ENCODE measurements at regions of chr5 and their contacts with region 1.

Region 1: DNA sequence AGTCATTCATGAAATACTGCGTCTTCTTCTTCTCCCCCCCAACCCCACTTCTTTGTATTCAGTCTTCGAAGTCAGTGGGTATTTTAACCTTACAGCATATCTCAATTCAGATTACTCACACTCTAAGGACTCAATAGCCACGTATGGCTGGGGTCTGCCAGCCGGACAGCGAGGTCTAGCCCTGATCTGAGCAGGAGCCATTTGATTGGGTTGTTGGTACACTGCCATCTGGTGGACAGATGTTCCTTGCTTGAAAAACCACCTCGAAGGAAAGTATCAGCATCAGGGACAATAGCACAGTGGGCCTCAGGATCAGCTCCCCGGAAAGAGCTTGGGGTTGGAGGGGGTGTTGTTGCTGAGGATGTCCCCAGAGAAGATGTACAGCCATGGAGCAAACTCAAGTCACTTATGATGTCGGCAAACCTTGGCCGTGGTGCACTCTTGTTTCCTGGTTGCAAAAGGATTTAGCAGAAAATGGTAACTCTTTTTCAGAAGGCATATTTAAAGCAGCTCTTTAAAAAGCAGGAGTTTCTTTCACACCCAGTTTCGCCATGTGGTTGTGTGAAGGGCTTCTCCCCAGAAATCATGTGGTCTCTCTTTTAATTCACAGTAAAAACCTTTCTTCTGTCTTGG is 31.7 kb upstream of the KCNMB1 start:
- DNase-seq: peak in 1 of 2 donors; percentile 75
- ATAC-seq: peak; percentile 62 to 75 (median 71)
- H3K4me3 ChIP-seq: no peak overlapping the region
- H3K27ac ChIP-seq: peak overlapping the region in 1 of 10 donors; percentile 6
- H3K4me1 ChIP-seq: peaks cover 0 to 32% (median 18%) of the 10 kb centered on the region in 9 donors
- H3K27me3 ChIP-seq: peaks cover 0 to 10% (median 0%) of the 10 kb centered on the region in 7 donors
- CTCF ChIP-seq: peak; percentile 64 to 89 (median 81)

Region 2: DNA sequence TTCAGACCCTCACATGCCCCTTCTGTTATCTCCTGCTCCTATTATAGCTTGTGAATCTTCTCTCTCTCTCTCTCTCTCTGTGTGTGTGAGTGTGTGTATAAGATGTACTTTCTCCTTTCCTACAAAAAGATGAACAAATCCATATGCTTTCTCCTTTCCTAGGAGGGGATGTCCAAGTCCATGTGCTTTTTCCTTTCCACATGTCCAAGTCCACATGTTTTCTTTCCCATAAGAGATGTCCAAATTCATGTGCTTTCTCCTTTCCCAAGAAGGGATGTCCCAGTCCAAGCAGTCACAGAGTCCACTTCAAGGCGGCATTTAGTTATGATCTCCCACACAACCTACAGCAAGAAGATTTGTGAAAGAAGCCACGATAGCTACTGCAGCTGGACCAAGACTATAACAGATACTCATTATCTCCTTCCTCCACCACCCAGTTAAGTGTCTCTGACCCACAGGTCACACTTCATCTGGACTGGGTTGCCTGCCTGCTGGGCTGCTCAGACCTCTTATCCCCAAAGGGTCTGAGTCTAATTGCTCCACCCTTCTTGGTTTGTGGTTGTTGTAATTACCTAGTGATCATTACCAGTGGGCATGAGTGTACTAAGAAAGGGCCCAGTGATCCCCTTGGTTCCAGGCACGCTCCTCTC is 333.6 kb before region 1 on chr5:
- intact Hi-C with region 1: loop called in 1 of 10 experiments (anchors 10 kb)
- DNase-seq: no peak
- ATAC-seq: no peak
- H3K4me3 ChIP-seq: no peak overlapping the region
- H3K27ac ChIP-seq: no peak overlapping the region
- H3K4me1 ChIP-seq: no peaks in the 10 kb centered on the region
- H3K27me3 ChIP-seq: peaks cover 0 to 20% (median 0%) of the 10 kb centered on the region in 7 donors
- CTCF ChIP-seq: no peak

Region 3: GRCh38 chr5:170100066-170100943 is 320.6 kb before region 1 on chr5:
- intact Hi-C with region 1: loop called in 6 of 10 experiments (anchors 2 to 10 kb)
- DNase-seq: peak; percentile 62 to 77
- ATAC-seq: peak in 7 of 8 donors; percentile 60 to 76 (median 68)
- H3K4me3 ChIP-seq: no peak overlapping the region
- H3K27ac ChIP-seq: no peak overlapping the region
- H3K4me1 ChIP-seq: peaks cover 0 to 37% (median 0%) of the 10 kb centered on the region in 9 donors
- H3K27me3 ChIP-seq: peaks cover 0 to 5% (median 0%) of the 10 kb centered on the region in 7 donors
- CTCF ChIP-seq: peak; percentile 37 to 76 (median 69)

Region 4: GRCh38 chr5:170262061-170263045 is 158.5 kb before region 1 on chr5:
- intact Hi-C with region 1: loop called in 6 of 10 experiments (anchors 2 to 10 kb)
- DNase-seq: no peak
- ATAC-seq: no peak
- H3K4me3 ChIP-seq: no peak overlapping the region
- H3K27ac ChIP-seq: peak overlapping the region in 1 of 10 donors; percentile 54
- H3K4me1 ChIP-seq: peaks cover 0 to 37% (median 1%) of the 10 kb centered on the region in 9 donors
- H3K27me3 ChIP-seq: peaks cover 0 to 16% (median 0%) of the 10 kb centered on the region in 7 donors
- CTCF ChIP-seq: no peak

Region 5: GRCh38 chr5:170267431-170268152 is 153.3 kb before region 1 on chr5:
- intact Hi-C with region 1: loop called in 9 of 10 experiments (anchors 2 to 10 kb)
- DNase-seq: peak; percentile 72 to 80
- ATAC-seq: peak; percentile 61 to 81 (median 74)
- H3K4me3 ChIP-seq: peak overlapping the region in 2 of 10 donors; percentile 17 to 18
- H3K27ac ChIP-seq: peak overlapping the region in 3 of 10 donors; percentile 8 to 88 (median 16)
- H3K4me1 ChIP-seq: peaks cover 0 to 81% (median 13%) of the 10 kb centered on the region in 9 donors
- H3K27me3 ChIP-seq: peaks cover 0 to 16% (median 0%) of the 10 kb centered on the region in 7 donors
- CTCF ChIP-seq: peak; percentile 78 to 90 (median 85)

Region 6: GRCh38 chr5:170278611-170279452 is 142.1 kb before region 1 on chr5:
- intact Hi-C with region 1: loop called in 1 of 10 experiments (anchors 2 kb)
- DNase-seq: peak; percentile 33 to 46
- ATAC-seq: peak; percentile 44 to 74 (median 58)
- H3K4me3 ChIP-seq: peak overlapping the region in 1 of 10 donors; percentile 26
- H3K27ac ChIP-seq: peak overlapping the region in 5 of 10 donors; percentile 6 to 87 (median 29)
- H3K4me1 ChIP-seq: peaks cover 0 to 97% (median 20%) of the 10 kb centered on the region in 9 donors
- H3K27me3 ChIP-seq: no peaks in the 10 kb centered on the region
- CTCF ChIP-seq: no peak

Region 7: DNA sequence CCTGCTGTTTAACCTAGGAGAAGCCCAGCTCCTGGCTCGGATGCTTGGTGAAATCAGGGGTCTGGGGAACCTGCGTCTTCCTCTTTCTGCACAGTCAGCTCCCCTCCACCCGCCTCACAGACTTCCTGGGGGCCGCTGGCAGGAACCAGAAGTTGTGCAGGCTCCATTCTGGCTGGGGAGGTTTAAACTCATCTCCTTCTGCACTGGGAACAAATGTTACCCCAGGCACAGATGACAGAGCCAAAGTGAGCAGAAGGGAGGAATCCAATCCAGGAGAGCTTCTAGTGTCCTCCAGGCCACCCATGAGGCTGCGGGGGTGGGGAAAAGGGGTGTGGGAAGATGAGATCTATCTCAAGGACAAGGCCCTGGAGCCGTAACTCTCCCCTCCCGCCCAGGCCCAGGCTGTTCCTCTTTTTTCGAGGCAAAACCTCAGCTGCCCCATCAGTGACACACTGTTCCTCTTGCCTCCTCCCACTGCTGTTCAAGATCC is 62.9 kb before region 1 on chr5:
- intact Hi-C with region 1: loop called in 2 of 10 experiments (anchors 5 kb)
- DNase-seq: peak; percentile 50 to 62
- ATAC-seq: peak in 7 of 8 donors; percentile 37 to 61 (median 43)
- H3K4me3 ChIP-seq: no peak overlapping the region
- H3K27ac ChIP-seq: peak overlapping the region in 5 of 10 donors; percentile 17 to 84 (median 43)
- H3K4me1 ChIP-seq: peaks cover 15 to 95% (median 71%) of the 10 kb centered on the region in 9 donors
- H3K27me3 ChIP-seq: peaks cover 0 to 8% (median 0%) of the 10 kb centered on the region in 7 donors
- CTCF ChIP-seq: no peak

Region 8: GRCh38 chr5:170508660-170509322 is 87.9 kb after region 1 on chr5:
- intact Hi-C with region 1: no loop called
- DNase-seq: no peak
- ATAC-seq: no peak
- H3K4me3 ChIP-seq: no peak overlapping the region
- H3K27ac ChIP-seq: no peak overlapping the region
- H3K4me1 ChIP-seq: peaks cover 0 to 4% (median 0%) of the 10 kb centered on the region in 9 donors
- H3K27me3 ChIP-seq: peaks cover 0 to 31% (median 23%) of the 10 kb centered on the region in 7 donors
- CTCF ChIP-seq: peak in 1 of 9 donors; percentile 6

Region 9: GRCh38 chr5:170865622-170866021 is 444.7 kb after region 1 on chr5:
- intact Hi-C with region 1: no loop called
- DNase-seq: no peak
- ATAC-seq: no peak
- H3K4me3 ChIP-seq: no peak overlapping the region
- H3K27ac ChIP-seq: no peak overlapping the region
- H3K4me1 ChIP-seq: peaks cover 0 to 17% (median 6%) of the 10 kb centered on the region in 9 donors
- H3K27me3 ChIP-seq: peaks cover 0 to 24% (median 0%) of the 10 kb centered on the region in 7 donors
- CTCF ChIP-seq: no peak

Region 10: GRCh38 chr5:170875811-170876210 is 454.9 kb after region 1 on chr5:
- intact Hi-C with region 1: no loop called
- DNase-seq: no peak
- ATAC-seq: no peak
- H3K4me3 ChIP-seq: no peak overlapping the region
- H3K27ac ChIP-seq: no peak overlapping the region
- H3K4me1 ChIP-seq: no peaks in the 10 kb centered on the region
- H3K27me3 ChIP-seq: no peaks in the 10 kb centered on the region
- CTCF ChIP-seq: no peak